ENCODE measurements at regions of chr17 and their contacts with region 1.

Region 1: GRCh38 chr17:49997791-49998703 is 3.0 kb upstream of the DLX3 start:
- DNase-seq: peak; percentile 88
- H3K4me3 ChIP-seq: no peak overlapping the region
- H3K27ac ChIP-seq: no peak overlapping the region
- H3K4me1 ChIP-seq: peaks cover 20 to 56% (median 43%) of the 10 kb centered on the region in 6 donors
- H3K27me3 ChIP-seq: peaks cover 5 to 100% (median 79%) of the 10 kb centered on the region in 7 donors
- CTCF ChIP-seq: peak; percentile 71 to 98 (median 93)
- POLR2A ChIP-seq: no peak

Region 2: GRCh38 chr17:49567871-49568694 is 430.0 kb before region 1 on chr17:
- intact Hi-C with region 1: loop called (anchors 5 kb)
- DNase-seq: peak; percentile 96
- H3K4me3 ChIP-seq: peak overlapping the region; percentile 16 to 65 (median 33)
- H3K27ac ChIP-seq: peak overlapping the region in 6 of 8 donors; percentile 36 to 68 (median 52)
- H3K4me1 ChIP-seq: peaks cover 3 to 45% (median 19%) of the 10 kb centered on the region in 6 donors
- H3K27me3 ChIP-seq: peaks cover 0 to 69% (median 0%) of the 10 kb centered on the region in 7 donors
- CTCF ChIP-seq: peak; percentile 90 to 99 (median 96)
- POLR2A ChIP-seq: no peak

Region 3: DNA sequence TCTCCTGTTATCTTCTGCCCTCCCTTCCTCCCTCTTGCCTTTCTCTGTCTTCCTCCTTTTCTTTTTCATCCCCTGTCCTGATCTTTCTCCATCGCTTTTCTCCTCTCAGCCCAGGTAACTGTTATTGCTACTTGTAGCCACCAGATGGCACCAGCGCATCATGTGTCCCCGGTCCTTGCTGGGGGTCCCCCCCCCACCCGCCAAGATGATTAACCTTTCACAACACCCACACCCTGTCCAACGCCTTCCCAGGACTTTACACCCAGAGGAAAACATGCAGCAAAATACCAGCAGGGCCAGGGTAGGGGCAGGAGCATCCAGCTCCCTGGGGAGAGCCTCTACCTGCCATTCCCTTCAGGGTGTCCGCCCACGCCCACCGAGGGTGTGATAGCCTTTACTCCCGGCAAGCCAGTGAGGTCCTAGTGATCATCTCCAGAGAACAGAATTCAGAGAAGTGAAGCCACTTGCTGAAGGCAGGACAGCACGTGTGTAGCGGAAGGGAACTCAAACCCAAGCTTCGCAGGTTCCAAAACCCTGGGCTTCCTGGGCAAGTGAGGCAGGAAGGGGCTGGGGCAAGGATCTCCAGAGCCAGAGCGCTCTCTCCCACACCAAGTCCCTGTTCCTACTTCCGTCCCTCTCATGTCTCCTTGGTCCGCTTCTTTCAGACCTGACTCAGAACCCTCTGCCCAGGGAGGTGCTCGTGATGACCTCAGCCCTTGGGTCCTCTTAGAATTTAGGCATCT is 136.7 kb before region 1 on chr17:
- intact Hi-C with region 1: loop called (anchors 2 kb)
- DNase-seq: no peak
- H3K4me3 ChIP-seq: no peak overlapping the region
- H3K27ac ChIP-seq: no peak overlapping the region
- H3K4me1 ChIP-seq: peaks cover 0 to 12% (median 0%) of the 10 kb centered on the region in 6 donors
- H3K27me3 ChIP-seq: peaks cover 0 to 41% (median 15%) of the 10 kb centered on the region in 7 donors
- CTCF ChIP-seq: peak; percentile 71 to 92 (median 90)
- POLR2A ChIP-seq: no peak

Region 4: GRCh38 chr17:49880291-49881053 is 117.6 kb before region 1 on chr17:
- intact Hi-C with region 1: loop called (anchors 5 kb)
- DNase-seq: peak; percentile 92
- H3K4me3 ChIP-seq: peak overlapping the region in 1 of 8 donors; percentile 43
- H3K27ac ChIP-seq: no peak overlapping the region
- H3K4me1 ChIP-seq: peaks cover 6 to 14% (median 8%) of the 10 kb centered on the region in 6 donors
- H3K27me3 ChIP-seq: peaks cover 0 to 91% (median 25%) of the 10 kb centered on the region in 7 donors
- CTCF ChIP-seq: peak; percentile 79 to 98 (median 95)
- POLR2A ChIP-seq: no peak

Region 5: GRCh38 chr17:49952209-49952911 is 45.7 kb before region 1 on chr17:
- intact Hi-C with region 1: loop called (anchors 2 kb)
- DNase-seq: peak; percentile 88
- H3K4me3 ChIP-seq: no peak overlapping the region
- H3K27ac ChIP-seq: no peak overlapping the region
- H3K4me1 ChIP-seq: peaks cover 0 to 12% (median 0%) of the 10 kb centered on the region in 6 donors
- H3K27me3 ChIP-seq: peaks cover 0 to 69% (median 10%) of the 10 kb centered on the region in 7 donors
- CTCF ChIP-seq: peak in 10 of 11 experiments; percentile 38 to 90 (median 74)
- POLR2A ChIP-seq: no peak

Measured in spleen (tissue), 13 donors.